ENCODE measurements at regions of chr11 and their contacts with region 1.

Region 1: GRCh38 chr11:88543902-88544655 is 206.5 kb upstream of the CTSC start:
- DNase-seq: peak; percentile 80 to 81
- H3K4me3 ChIP-seq: no peak overlapping the region
- H3K27ac ChIP-seq: no peak overlapping the region
- H3K4me1 ChIP-seq: peaks cover 3% of the 10 kb centered on the region
- H3K27me3 ChIP-seq: no peaks in the 10 kb centered on the region
- CTCF ChIP-seq: peak; percentile 99

Region 2: DNA sequence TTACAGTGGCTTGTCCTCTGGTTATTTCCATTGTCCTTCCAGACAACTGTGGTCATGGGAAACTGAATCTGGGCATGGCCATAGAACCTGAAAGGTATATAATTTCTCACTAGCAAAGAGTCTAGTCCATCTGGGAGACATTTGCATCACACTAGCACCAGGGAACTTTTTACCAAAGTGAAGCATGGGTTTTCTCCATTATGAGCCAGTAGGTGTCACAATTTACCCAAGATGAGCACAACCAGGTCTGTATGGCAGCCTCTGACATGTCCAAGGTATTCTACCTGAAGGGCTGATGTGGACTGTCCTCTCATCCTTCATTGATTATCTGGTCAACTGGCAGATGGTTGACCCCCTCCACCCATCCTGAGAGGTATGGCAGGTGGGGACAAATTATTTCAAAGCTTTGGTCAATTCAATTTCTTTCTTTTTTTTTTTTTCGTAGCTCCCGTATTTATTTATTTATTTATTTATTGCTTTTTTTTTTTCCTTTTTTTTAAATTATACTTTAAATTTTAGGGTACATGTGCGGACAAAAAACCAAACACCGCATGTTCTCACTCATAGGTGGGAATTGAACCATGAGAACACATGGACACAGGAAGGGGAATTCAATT is 1080.5 kb before region 1 on chr11:
- CTCF ChIA-PET with region 1: interaction called, 7 read pairs
- POLR2A ChIA-PET with region 1: no interaction called
- intact Hi-C with region 1: loop called (anchors 1 kb)
- DNase-seq: peak in 1 of 2 experiments; percentile 3
- H3K4me3 ChIP-seq: no peak overlapping the region
- H3K27ac ChIP-seq: no peak overlapping the region
- H3K4me1 ChIP-seq: no peaks in the 10 kb centered on the region
- H3K27me3 ChIP-seq: no peaks in the 10 kb centered on the region
- CTCF ChIP-seq: peak; percentile 66

Region 3: DNA sequence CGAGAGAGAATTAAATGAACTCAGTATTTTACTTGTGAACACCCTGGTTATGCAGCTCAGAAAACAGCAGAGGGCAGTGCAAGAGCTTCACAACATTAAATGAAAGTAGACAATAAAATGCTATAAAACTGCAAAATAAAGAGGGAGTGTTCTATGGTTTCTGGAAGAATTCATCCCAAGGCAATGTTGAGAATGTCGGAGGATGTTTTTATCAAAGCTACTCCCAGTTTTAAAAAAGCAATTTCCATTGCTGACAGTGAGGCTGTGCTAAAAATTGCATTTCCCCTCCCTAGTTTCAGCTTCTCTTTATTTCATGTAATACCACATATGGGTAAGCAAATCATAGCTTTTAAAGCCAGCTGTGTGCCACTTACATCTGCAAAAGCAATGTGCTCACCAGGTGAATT is 665.7 kb before region 1 on chr11:
- CTCF ChIA-PET with region 1: no interaction called
- POLR2A ChIA-PET with region 1: no interaction called
- intact Hi-C with region 1: loop called (anchors 1 kb)
- DNase-seq: peak in 1 of 2 experiments; percentile 4
- H3K4me3 ChIP-seq: no peak overlapping the region
- H3K27ac ChIP-seq: no peak overlapping the region
- H3K4me1 ChIP-seq: no peaks in the 10 kb centered on the region
- H3K27me3 ChIP-seq: no peaks in the 10 kb centered on the region
- CTCF ChIP-seq: peak; percentile 77

Region 4: DNA sequence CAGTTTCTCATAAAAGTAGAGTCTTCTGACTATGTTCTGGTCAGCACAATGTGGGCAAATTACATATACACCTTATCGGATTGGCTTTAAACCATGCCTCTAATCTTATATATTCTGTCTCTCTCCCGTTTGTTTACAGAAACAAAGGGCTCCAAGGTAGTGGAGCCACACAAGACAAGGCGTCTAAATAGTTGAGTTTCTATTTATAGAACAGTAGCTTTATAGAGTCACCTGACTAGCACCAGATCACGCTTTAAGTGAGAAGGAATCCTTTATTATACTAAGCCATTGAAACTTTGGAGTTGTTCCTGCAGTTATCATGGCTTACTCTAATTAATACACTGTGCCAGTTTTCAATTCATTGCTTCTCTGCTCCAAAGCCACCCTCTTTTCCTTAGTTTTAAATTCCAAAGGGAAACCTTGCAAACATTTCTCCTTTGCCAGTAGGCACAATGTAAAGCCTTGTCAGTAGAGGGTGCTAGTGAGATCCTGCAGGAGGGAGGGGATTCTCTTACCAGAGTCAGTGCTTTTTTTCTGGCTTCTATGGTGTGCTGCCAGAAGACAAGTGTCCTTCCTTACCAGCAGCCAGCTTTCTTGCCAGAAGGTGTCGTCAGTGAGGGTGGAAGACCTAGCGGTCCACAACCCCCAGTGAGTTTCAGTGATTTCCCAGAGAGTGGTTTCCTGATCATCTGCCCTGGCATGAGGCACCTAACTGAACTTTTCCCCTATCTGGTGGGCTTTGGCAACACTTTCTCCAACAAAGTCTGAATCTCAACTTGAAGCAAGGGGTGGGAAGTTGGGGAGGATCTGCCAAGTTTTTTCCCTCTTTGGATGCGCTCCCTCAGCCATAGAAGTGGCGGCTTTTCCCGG is 440.5 kb before region 1 on chr11:
- CTCF ChIA-PET with region 1: no interaction called
- POLR2A ChIA-PET with region 1: no interaction called
- intact Hi-C with region 1: loop called (anchors 1 kb)
- DNase-seq: peak; percentile 6 to 57
- H3K4me3 ChIP-seq: no peak overlapping the region
- H3K27ac ChIP-seq: no peak overlapping the region
- H3K4me1 ChIP-seq: 0 out of 2 replicates have a peak, but pooled peaks cover 5% of the 10 kb centered on the region
- H3K27me3 ChIP-seq: no peaks in the 10 kb centered on the region
- CTCF ChIP-seq: peak; percentile 68

Region 5: DNA sequence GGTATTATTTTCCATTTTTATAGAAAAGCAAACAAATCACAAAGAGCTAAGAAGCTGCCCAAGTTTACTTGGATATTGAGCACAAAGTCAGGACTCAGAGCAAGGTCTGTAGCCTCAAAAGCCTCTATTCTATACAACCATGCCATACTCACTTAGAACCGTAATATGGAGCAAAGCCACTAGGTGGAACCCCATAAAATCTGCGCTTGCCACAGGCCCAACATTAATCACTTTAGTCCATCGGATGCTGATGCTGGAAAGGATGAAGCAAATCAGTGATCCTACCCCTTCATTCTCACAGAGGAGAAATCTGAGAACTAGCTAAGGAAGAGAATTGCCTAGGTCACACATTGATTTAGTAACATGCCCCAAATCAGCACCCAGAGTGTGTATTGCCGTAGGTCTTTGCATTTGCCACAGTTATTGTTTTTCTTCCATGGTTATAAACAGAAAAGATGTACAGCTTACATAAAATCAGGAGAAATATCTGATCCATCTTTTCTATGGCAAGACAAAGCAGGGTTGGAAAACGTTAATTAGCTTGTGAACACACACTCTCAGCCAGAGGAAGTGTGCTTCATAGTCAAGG is 312.1 kb before region 1 on chr11:
- CTCF ChIA-PET with region 1: no interaction called
- POLR2A ChIA-PET with region 1: no interaction called
- intact Hi-C with region 1: loop called (anchors 1 kb)
- DNase-seq: peak; percentile 4 to 35
- H3K4me3 ChIP-seq: no peak overlapping the region
- H3K27ac ChIP-seq: no peak overlapping the region
- H3K4me1 ChIP-seq: no peaks in the 10 kb centered on the region
- H3K27me3 ChIP-seq: no peaks in the 10 kb centered on the region
- CTCF ChIP-seq: peak; percentile 84

Region 6: GRCh38 chr11:88384673-88385005 is 159.4 kb before region 1 on chr11:
- CTCF ChIA-PET with region 1: no interaction called
- POLR2A ChIA-PET with region 1: no interaction called
- intact Hi-C with region 1: loop called (anchors 5 kb)
- DNase-seq: peak; percentile 36 to 85
- H3K4me3 ChIP-seq: peak overlapping the region; percentile 37; the same call in 1 of the 2 replicates
- H3K27ac ChIP-seq: peak overlapping the region; percentile 44
- H3K4me1 ChIP-seq: peaks cover 52% of the 10 kb centered on the region
- H3K27me3 ChIP-seq: no peaks in the 10 kb centered on the region
- CTCF ChIP-seq: no peak

Region 7: GRCh38 chr11:88521399-88522180 is 22.5 kb before region 1 on chr11:
- CTCF ChIA-PET with region 1: no interaction called
- POLR2A ChIA-PET with region 1: no interaction called
- intact Hi-C with region 1: no loop called
- DNase-seq: no peak
- H3K4me3 ChIP-seq: no peak overlapping the region
- H3K27ac ChIP-seq: no peak overlapping the region
- H3K4me1 ChIP-seq: no peaks in the 10 kb centered on the region
- H3K27me3 ChIP-seq: no peaks in the 10 kb centered on the region
- CTCF ChIP-seq: no peak

Measured in PC-9 (cell line).